GM12878 (cell line): ENCODE measurements at regions of chrX and their contacts with region 1.

Region 1: GRCh38 chrX:44291468-44292113 is 51.9 kb downstream of the EFHC2 start:
- DNase-seq: no peak
- ATAC-seq: peak; percentile 68
- H3K4me3 ChIP-seq: no peak overlapping the region
- H3K27ac ChIP-seq: no peak overlapping the region
- H3K4me1 ChIP-seq: no peaks in the 10 kb centered on the region
- H3K27me3 ChIP-seq: no peaks in the 10 kb centered on the region
- CTCF ChIP-seq: no peak
- EP300 ChIP-seq: peak in 1 of 2 experiments; percentile 56; a peak in 2 of 4 replicates
- POLR2A ChIP-seq: no peak
- RAD21 ChIP-seq: no peak

Region 2: GRCh38 chrX:44203791-44204190 is 87.8 kb before region 1 on chrX:
- CTCF ChIA-PET with region 1: no interaction called
- POLR2A ChIA-PET with region 1: no interaction called
- RAD21 ChIA-PET with region 1: no interaction called
- SMC1A ChIA-PET with region 1: no interaction called
- in situ Hi-C with region 1: no loop called
- intact Hi-C with region 1: no loop called
- DNase-seq: no peak
- ATAC-seq: no peak
- H3K4me3 ChIP-seq: no peak overlapping the region
- H3K27ac ChIP-seq: no peak overlapping the region
- H3K4me1 ChIP-seq: no peaks in the 10 kb centered on the region
- H3K27me3 ChIP-seq: no peaks in the 10 kb centered on the region
- CTCF ChIP-seq: peak in 1 of 3 experiments; percentile 6; a peak in 1 of 6 replicates
- EP300 ChIP-seq: no peak
- POLR2A ChIP-seq: no peak
- RAD21 ChIP-seq: no peak

Region 3: GRCh38 chrX:44303119-44303518 is 11.5 kb after region 1 on chrX:
- CTCF ChIA-PET with region 1: interaction called, 4 read pairs
- POLR2A ChIA-PET with region 1: interaction called, 4 read pairs
- RAD21 ChIA-PET with region 1: interaction called, 3 read pairs
- SMC1A ChIA-PET with region 1: interaction called, 10 read pairs
- in situ Hi-C with region 1: no loop called
- intact Hi-C with region 1: no loop called
- DNase-seq: no peak
- ATAC-seq: no peak
- H3K4me3 ChIP-seq: no peak overlapping the region
- H3K27ac ChIP-seq: no peak overlapping the region
- H3K4me1 ChIP-seq: no peaks in the 10 kb centered on the region
- H3K27me3 ChIP-seq: no peaks in the 10 kb centered on the region
- CTCF ChIP-seq: peak in 1 of 3 experiments; percentile 22; a peak in 1 of 6 replicates
- EP300 ChIP-seq: no peak
- POLR2A ChIP-seq: no peak
- RAD21 ChIP-seq: no peak